GM18951 (cell line): ENCODE measurements at regions of chr6 and their contacts with region 1.

Region 1: GRCh38 chr6:21593412-21593926 is at the start of gene SOX4:
- POLR2A ChIP-seq: peak; percentile 98

Region 2: GRCh38 chr6:20564269-20564668 is 1029.2 kb before region 1 on chr6:
- in situ Hi-C with region 1: loop called (anchors 25 kb)
- POLR2A ChIP-seq: no peak

Region 3: DNA sequence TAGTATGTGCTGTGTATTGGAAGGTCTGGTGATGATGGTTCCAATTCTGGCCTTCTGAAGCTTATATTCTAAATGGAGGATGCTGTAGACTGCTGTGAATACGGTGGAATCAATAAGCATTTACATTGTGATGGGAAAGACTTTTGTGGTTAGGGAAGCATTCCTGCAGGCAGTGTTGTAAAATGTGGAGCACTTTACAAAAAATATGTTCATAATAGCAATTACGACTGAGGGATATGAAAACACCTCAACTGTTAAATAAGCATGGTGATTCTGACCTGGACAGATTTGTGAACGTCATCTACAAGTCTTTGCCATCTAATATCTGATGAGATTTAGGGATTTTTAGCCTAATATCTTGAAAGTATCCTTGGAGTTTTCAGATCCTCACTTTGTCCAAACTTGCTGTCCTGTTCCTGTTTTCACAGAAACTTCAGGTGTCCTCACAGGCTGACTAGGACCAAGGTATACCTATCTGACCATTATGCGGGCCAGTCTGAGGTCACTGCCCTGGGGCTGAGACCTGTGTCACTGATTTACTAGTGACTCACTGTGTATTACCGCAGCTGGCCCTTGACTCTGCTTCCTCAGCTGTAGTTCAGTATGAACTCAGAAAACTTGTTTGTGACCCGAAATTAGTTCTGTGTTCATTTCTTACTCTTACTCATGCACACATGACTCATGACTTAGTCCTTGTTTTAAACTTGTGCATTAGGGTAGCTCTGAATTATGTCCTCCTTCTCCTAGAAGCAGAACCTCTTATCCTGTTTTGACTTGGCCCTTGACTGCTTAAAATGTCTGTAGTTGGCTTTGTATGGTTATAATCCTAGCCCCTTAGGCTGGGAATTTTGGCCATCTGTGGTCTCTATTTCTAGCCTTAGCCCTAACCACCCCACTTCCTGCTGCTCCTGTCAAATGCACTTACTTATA is 716.2 kb before region 1 on chr6:
- in situ Hi-C with region 1: loop called (anchors 10 kb)
- POLR2A ChIP-seq: no peak

Region 4: DNA sequence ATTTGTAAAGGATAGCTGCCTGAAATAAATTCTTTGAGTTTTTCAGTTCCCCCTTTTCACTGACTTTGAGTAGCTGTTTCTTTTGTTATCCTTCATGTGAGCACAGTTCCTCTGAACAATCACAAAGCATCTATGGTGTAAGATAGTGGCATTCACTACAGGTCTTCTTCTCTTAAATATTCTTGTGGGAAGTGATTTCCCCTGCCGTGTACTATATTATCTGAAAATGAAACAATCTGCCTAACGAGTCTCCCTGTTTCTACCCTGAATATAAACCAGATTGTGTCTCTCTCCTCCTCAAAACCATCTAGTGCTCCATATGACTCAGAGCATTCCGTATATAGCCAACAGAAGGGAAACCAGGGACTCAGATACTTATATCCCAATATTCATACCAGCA is 380.0 kb before region 1 on chr6:
- in situ Hi-C with region 1: loop called (anchors 25 kb)
- POLR2A ChIP-seq: no peak

Region 5: GRCh38 chr6:22053391-22053997 is 460.0 kb after region 1 on chr6:
- in situ Hi-C with region 1: no loop called
- POLR2A ChIP-seq: no peak